ENCODE measurements at regions of chr17 and their contacts with region 1.

Region 1: DNA sequence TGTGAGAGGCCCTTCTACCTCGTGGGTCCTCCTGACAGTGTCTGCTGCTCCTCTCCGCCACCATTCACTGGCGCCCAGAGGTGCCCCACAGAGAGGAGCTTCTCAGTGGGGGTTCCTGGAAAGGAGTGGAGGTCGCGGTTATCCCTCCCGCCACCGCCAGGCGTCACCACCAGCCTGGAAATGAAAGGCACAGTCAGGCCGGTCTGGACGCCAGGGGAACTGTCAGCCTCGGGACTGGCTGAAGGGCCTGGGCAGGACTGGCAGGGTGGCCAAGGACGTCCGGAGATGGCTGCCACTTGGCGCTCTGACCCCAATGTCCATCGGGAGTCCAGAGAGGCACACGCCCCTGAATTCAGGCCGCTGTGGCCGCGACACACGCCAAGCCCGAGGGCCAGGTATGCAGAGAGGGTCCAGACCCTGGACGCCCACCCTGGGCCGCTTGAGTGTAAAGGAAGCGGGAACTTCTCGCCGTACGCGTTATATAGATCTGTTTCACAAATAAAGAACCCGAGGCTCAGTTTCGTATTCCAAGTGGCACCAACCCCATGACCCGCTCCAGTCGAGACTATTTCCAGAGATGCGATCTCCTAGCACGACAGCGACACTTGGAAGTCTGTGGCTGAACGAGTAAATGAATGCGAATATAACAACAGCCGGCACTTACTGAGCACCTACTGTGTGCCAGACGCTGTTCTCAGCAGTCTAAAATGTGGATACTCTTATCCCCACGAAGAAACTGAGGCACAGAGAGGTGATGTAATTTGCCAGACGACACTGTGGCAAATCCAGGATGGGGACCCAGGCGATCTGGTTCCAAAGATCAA is 7.6 kb upstream of the NXPH3 start:
- DNase-seq: peak; percentile 89
- H3K4me3 Mint-ChIP-seq: peak overlapping the region; percentile 74
- H3K27ac Mint-ChIP-seq: no peak overlapping the region
- H3K4me1 Mint-ChIP-seq: peaks cover 15% of the 10 kb centered on the region
- H3K27me3 Mint-ChIP-seq: peaks cover 8% of the 10 kb centered on the region

Region 2: GRCh38 chr17:49486012-49486641 is 82.0 kb before region 1 on chr17:
- CTCF ChIA-PET with region 1: no interaction called
- intact Hi-C with region 1: no loop called
- DNase-seq: peak; percentile 25
- H3K4me3 Mint-ChIP-seq: no peak overlapping the region
- H3K27ac Mint-ChIP-seq: no peak overlapping the region
- H3K4me1 Mint-ChIP-seq: peaks cover 6% of the 10 kb centered on the region
- H3K27me3 Mint-ChIP-seq: peaks cover 41% of the 10 kb centered on the region

Region 3: GRCh38 chr17:49545007-49545660 is 22.9 kb before region 1 on chr17:
- CTCF ChIA-PET with region 1: no interaction called
- intact Hi-C with region 1: no loop called
- DNase-seq: no peak
- H3K4me3 Mint-ChIP-seq: no peak overlapping the region
- H3K27ac Mint-ChIP-seq: no peak overlapping the region
- H3K4me1 Mint-ChIP-seq: no peaks in the 10 kb centered on the region
- H3K27me3 Mint-ChIP-seq: no peaks in the 10 kb centered on the region

Region 4: GRCh38 chr17:49687878-49688491 is 119.9 kb after region 1 on chr17:
- CTCF ChIA-PET with region 1: interaction called, 232 read pairs
- intact Hi-C with region 1: no loop called
- DNase-seq: peak; percentile 53
- H3K4me3 Mint-ChIP-seq: peak overlapping the region; percentile 36
- H3K27ac Mint-ChIP-seq: peak overlapping the region; percentile 90
- H3K4me1 Mint-ChIP-seq: peaks cover 47% of the 10 kb centered on the region
- H3K27me3 Mint-ChIP-seq: no peaks in the 10 kb centered on the region

Region 5: GRCh38 chr17:49779739-49780231 is 211.7 kb after region 1 on chr17:
- CTCF ChIA-PET with region 1: interaction called, 4 read pairs
- intact Hi-C with region 1: loop called (anchors 1 kb)
- DNase-seq: peak; percentile 60
- H3K4me3 Mint-ChIP-seq: no peak overlapping the region
- H3K27ac Mint-ChIP-seq: no peak overlapping the region
- H3K4me1 Mint-ChIP-seq: no peaks in the 10 kb centered on the region
- H3K27me3 Mint-ChIP-seq: no peaks in the 10 kb centered on the region

Region 6: DNA sequence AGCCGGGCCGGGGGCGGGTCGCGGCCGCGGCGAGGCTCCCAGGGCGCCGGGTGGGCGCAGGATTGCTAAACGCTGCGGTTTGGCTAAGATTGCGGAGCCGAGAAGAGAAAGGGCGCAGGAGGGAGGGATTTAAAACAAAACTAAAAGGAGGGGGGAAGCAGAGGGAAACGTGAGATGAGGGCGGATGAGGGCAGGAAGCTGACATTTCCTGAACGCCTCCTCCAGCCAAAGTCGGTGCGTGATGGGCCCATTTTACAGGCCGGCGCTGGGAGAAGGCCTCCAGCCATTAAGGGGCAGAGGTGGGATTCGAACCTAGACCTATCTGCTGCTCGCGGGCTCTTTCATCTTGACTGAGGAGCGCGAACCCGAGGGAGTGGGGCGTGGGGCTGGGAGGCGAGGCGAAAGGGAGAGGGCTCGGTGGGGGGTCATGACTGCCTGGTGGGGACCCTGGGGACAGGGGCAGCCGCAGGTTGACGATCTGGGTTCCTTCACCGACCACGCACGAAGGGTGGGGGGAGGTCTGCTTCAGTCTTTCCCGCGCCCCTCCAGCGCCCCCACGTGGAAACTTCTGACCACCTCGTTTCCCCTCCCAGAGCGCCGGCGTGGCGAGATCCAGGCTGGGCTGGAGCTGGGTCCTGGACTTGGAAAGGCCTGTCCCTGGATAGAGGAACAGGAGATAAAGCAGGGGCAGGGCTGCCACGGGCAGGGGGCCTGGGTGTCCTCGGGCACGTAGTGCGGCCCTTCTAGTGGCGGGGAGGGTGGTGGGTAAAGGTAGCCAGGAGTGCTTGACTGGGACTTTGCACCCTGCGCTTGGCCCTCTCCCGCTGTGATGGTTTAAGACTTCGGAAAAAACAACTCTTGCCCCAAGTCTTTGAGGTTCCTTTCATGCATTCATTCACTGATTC is 283.6 kb after region 1 on chr17:
- CTCF ChIA-PET with region 1: interaction called, 4 read pairs
- intact Hi-C with region 1: loop called (anchors 1 kb)
- DNase-seq: peak; percentile 76
- H3K4me3 Mint-ChIP-seq: peak overlapping the region; percentile 78
- H3K27ac Mint-ChIP-seq: peak overlapping the region; percentile 64
- H3K4me1 Mint-ChIP-seq: peaks cover 12% of the 10 kb centered on the region
- H3K27me3 Mint-ChIP-seq: peaks cover 2% of the 10 kb centered on the region

Measured in activated naive CD4-positive, alpha-beta T cell treated with anti-CD3 and anti-CD28 coated beads for 36 hours (primary cell).